ENCODE measurements at regions of chr1 and their contacts with region 1.

Region 1: GRCh38 chr1:151762941-151763921 is at the start of gene MRPL9:
- DNase-seq: peak; percentile 95
- H3K4me3 ChIP-seq: peak within 1 kb of the TSS; percentile 72 to 95 (median 86)
- H3K27ac ChIP-seq: peak within 1 kb of the TSS; percentile 85 to 94 (median 90)
- H3K4me1 ChIP-seq: peaks cover 9 to 20% (median 15%) of the 10 kb centered on the region in 4 donors
- H3K27me3 ChIP-seq: no peaks in the 10 kb centered on the region
- CTCF ChIP-seq: no peak
- EP300 ChIP-seq: no peak
- POLR2A ChIP-seq: no peak
- total RNA-seq, gene MRPL9: 49.8 to 57.0 (median 56.5) TPM

Region 2: GRCh38 chr1:151574545-151575529 is 188.4 kb before region 1 on chr1:
- intact Hi-C with region 1: no loop called
- DNase-seq: no peak
- H3K4me3 ChIP-seq: no peak overlapping the region
- H3K27ac ChIP-seq: no peak overlapping the region
- H3K4me1 ChIP-seq: no peaks in the 10 kb centered on the region
- H3K27me3 ChIP-seq: no peaks in the 10 kb centered on the region
- CTCF ChIP-seq: no peak
- EP300 ChIP-seq: no peak
- POLR2A ChIP-seq: no peak

Region 3: DNA sequence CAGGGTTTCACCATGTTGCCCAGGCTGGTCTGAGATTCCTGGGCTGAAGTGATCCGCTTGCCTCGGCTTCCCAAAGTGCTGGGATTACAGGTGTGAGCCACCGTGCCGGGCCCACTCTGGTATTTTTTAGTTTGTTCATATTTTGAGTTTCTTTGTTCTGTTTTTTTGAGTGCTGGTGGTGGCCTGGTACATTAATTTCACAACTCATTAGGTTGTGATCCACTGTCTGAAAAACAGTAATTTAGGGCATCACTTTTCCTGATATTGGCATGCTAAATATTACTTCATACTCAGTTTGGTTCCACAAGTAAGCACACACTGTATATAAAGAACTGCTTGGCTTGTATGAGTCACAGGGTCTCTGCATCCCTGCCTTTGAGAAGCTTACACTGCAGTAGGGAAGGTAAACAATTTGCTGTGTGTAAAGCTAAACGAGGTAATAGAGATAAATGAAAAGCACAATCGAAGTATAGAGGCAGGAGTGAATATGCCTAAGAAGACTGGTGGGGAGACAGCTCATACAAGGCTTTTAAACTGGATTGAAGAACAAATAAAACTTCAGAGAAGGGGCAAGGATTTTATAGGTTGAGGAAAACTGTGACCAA is 143.6 kb before region 1 on chr1:
- intact Hi-C with region 1: no loop called
- DNase-seq: no peak
- H3K4me3 ChIP-seq: no peak overlapping the region
- H3K27ac ChIP-seq: peak overlapping the region; percentile 67 to 96 (median 72)
- H3K4me1 ChIP-seq: peaks cover 17 to 89% (median 81%) of the 10 kb centered on the region in 4 donors
- H3K27me3 ChIP-seq: no peaks in the 10 kb centered on the region
- CTCF ChIP-seq: no peak
- EP300 ChIP-seq: no peak
- POLR2A ChIP-seq: no peak

Region 4: GRCh38 chr1:151728151-151729054 is 34.8 kb before region 1 on chr1:
- intact Hi-C with region 1: no loop called
- DNase-seq: no peak
- H3K4me3 ChIP-seq: peak overlapping the region; percentile 20 to 39 (median 36)
- H3K27ac ChIP-seq: peak overlapping the region; percentile 76 to 83 (median 80)
- H3K4me1 ChIP-seq: peaks cover 8 to 21% (median 16%) of the 10 kb centered on the region in 4 donors
- H3K27me3 ChIP-seq: no peaks in the 10 kb centered on the region
- CTCF ChIP-seq: no peak
- EP300 ChIP-seq: no peak
- POLR2A ChIP-seq: no peak

Region 5: GRCh38 chr1:151790071-151790940 is 27.1 kb after region 1 on chr1 and contains the start of gene TDRKH:
- intact Hi-C with region 1: loop called (anchors 2 kb)
- DNase-seq: peak; percentile 99
- H3K4me3 ChIP-seq: peak within 1 kb of the TSS; percentile 68 to 83 (median 72)
- H3K27ac ChIP-seq: peak within 1 kb of the TSS; percentile 68 to 77 (median 70)
- H3K4me1 ChIP-seq: peaks cover 0 to 22% (median 16%) of the 10 kb centered on the region in 4 donors
- H3K27me3 ChIP-seq: no peaks in the 10 kb centered on the region
- CTCF ChIP-seq: peak in 2 of 3 experiments; percentile 27 to 42
- EP300 ChIP-seq: no peak
- POLR2A ChIP-seq: peak; percentile 11
- total RNA-seq, gene TDRKH: 4.0 to 8.7 (median 6.1) TPM

Region 6: DNA sequence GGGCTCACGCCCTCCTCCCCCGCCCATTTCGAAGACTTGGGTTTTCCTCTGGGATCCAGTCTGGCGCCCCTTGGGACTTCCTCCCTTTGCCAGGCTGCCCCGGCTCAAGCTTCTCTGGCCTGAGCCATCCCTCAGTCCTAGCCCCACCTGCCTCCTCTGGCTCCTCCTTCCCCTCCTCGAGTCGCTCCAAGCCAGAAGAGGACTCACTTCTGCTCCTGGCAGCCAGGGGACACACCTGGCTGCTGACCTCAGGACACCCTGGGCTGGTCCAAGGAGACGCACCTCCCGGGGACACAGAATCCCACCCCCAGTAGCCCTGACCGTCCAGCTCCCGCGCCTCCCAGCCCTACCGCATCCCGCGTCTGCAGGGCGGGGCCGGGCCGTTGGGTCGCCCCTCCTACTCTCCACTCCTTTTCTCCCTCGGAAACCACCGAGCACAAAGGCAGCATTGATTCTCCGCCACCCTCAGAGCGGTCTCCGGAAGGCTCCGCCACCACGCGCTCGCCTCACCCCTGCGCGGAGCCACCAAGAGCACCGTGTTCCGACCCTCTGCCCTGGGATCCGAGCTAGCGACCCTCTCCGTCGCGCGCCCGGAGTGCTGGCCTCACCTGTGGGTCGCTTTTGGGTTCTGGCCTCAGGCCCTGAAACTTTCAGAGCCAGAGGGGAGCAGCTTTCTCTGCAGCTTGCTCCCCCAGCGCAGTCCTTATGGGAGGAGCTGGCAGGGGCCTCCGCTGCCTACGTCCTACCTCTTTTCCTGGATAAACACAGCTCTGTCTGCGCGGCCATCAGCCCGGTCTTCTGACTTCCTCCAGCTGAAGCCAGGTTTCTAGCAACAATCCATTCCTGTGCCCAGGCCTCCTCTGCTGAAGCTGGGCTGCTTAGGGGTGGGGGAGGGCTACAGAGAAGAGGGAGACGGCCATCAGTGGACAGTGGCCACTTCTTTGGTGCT is 76.5 kb after region 1 on chr1 and contains the start of gene C2CD4D:
- intact Hi-C with region 1: loop called (anchors 10 kb)
- DNase-seq: no peak
- H3K4me3 ChIP-seq: peak within 1 kb of the TSS; percentile 56 to 65 (median 56)
- H3K27ac ChIP-seq: peak within 1 kb of the TSS in 2 of 4 donors; percentile 26 to 28
- H3K4me1 ChIP-seq: peaks cover 22 to 33% (median 31%) of the 10 kb centered on the region in 4 donors
- H3K27me3 ChIP-seq: peaks cover 8 to 59% (median 21%) of the 10 kb centered on the region in 4 donors
- CTCF ChIP-seq: no peak
- EP300 ChIP-seq: no peak
- POLR2A ChIP-seq: no peak
- total RNA-seq, gene C2CD4D: not detected